Dorsolateral prefrontal cortex (tissue), 120 donors: ENCODE measurements at regions of chr2 and their contacts with region 1.

Region 1: GRCh38 chr2:125684932-125685331 is 971.0 kb upstream of the GYPC start:
- DNase-seq: no peak
- H3K4me3 ChIP-seq: no peak overlapping the region
- H3K27ac ChIP-seq: peak overlapping the region in 23 of 59 donors; percentile 2 to 70 (median 46)
- H3K27me3 ChIP-seq: no peaks in the 10 kb centered on the region
- CTCF ChIP-seq: no peak

Region 2: GRCh38 chr2:125216321-125216720 is 468.6 kb before region 1 on chr2:
- intact Hi-C with region 1: no loop called
- DNase-seq: no peak
- H3K4me3 ChIP-seq: no peak overlapping the region
- H3K27ac ChIP-seq: no peak overlapping the region
- H3K27me3 ChIP-seq: no peaks in the 10 kb centered on the region
- CTCF ChIP-seq: no peak

Region 3: GRCh38 chr2:125696561-125696960 is 11.6 kb after region 1 on chr2:
- intact Hi-C with region 1: loop called in 1 of 2 experiments (anchors 1 kb)
- DNase-seq: no peak
- H3K4me3 ChIP-seq: no peak overlapping the region
- H3K27ac ChIP-seq: no peak overlapping the region
- H3K27me3 ChIP-seq: no peaks in the 10 kb centered on the region
- CTCF ChIP-seq: no peak